ENCODE measurements at regions of chr7 and their contacts with region 1.

Region 1: DNA sequence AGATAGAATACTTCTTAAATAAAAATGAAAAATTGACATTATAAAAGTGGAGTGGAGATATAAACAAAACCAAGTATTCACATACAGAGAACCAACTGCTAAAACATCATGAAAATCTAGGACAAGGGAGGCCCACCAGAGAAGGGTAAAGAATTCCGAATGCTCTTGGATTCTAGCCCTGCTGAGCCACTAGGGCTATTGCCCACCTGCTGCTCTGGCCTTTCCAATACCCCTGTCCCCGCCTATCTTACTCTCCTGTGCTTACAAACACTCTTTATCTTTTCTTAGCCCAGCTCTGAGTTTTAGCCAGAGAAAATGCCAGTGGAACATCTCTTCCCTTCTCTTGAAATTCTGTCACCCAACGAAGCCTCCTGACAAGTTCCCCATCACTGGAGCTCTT is 100.3 kb downstream of the MACC1 start:
- DNase-seq: no peak
- ATAC-seq: no peak
- H3K4me3 ChIP-seq: no peak overlapping the region
- H3K4me3 Mint-ChIP-seq: no peak overlapping the region
- H3K27ac ChIP-seq: no peak overlapping the region
- H3K27ac Mint-ChIP-seq: no peak overlapping the region
- H3K4me1 ChIP-seq: no peaks in the 10 kb centered on the region
- H3K4me1 Mint-ChIP-seq: peaks cover 2% of the 10 kb centered on the region
- H3K27me3 ChIP-seq: no peaks in the 10 kb centered on the region
- H3K27me3 Mint-ChIP-seq: no peaks in the 10 kb centered on the region
- CTCF ChIP-seq: no peak

Region 2: GRCh38 chr7:20164425-20165145 is 47.7 kb after region 1 on chr7:
- CTCF ChIA-PET with region 1: no interaction called
- POLR2A ChIA-PET with region 1: no interaction called
- intact Hi-C with region 1: loop called in 1 of 2 experiments (anchors 1 kb)
- DNase-seq: no peak
- ATAC-seq: no peak
- H3K4me3 ChIP-seq: no peak overlapping the region
- H3K4me3 Mint-ChIP-seq: no peak overlapping the region
- H3K27ac ChIP-seq: no peak overlapping the region
- H3K27ac Mint-ChIP-seq: no peak overlapping the region
- H3K4me1 ChIP-seq: no peaks in the 10 kb centered on the region
- H3K4me1 Mint-ChIP-seq: no peaks in the 10 kb centered on the region
- H3K27me3 ChIP-seq: no peaks in the 10 kb centered on the region
- H3K27me3 Mint-ChIP-seq: no peaks in the 10 kb centered on the region
- CTCF ChIP-seq: no peak

Measured in CD8-positive, alpha-beta T cell (primary cell).